ENCODE measurements at regions of chr15 and their contacts with region 1.

Region 1: GRCh38 chr15:62742409-62743171 is 300.0 kb upstream of the TPM1 start:
- DNase-seq: peak; percentile 63
- ATAC-seq: no peak; the same call in 1 of the 2 replicates
- H3K4me3 ChIP-seq: peak overlapping the region; percentile 20; the same call in 1 of the 2 replicates
- H3K27ac ChIP-seq: no peak overlapping the region; the same call in 1 of the 2 replicates
- H3K4me1 ChIP-seq: peaks cover 45% of the 10 kb centered on the region
- H3K27me3 ChIP-seq: no peaks in the 10 kb centered on the region
- CTCF ChIP-seq: peak; percentile 82

Region 2: DNA sequence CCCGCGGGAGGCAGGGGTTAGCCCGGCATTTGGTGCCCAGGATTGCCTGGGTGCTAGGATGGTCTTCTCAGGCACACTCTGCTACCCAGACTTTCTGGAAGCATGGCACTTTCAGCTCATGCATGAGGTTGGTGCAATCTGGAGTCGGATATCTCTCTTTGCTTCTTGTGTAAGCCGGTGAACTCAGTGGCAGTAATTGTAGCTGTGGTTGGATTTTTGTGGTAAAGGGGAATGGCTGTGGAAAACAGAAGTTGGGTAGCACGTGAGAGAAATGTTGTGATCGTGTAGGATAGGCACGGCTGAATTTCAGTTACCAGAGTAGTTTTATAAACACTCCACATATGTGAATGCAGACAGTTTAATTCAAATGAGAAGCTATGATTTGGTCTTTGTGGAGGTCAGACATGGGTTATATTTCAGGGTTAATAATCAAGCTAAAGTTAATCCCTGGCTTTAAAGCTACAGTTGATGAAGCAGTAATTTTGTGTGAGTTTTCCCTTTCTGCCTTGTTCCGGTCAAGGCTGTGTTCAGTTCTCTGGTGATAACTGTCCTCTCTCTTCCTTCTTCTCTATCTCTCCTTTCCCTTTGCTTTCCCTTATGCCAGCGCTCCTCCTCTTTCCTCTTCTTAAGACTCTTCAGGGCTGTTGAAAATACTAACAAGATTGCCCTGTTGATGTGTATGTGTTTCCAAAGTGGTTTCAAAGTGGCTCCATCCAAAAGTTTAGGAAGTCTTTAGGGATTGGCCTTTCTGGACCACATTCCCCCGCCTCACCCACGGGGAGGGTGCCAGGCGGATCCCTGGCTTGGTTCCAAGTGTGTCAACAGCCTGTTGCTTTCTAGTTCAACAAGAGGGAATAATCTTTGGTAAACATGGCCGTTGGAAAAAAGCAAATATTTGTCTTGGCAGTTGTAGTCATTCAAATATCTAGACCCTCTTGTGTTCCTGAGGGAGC is 172.9 kb before region 1 on chr15:
- CTCF ChIA-PET with region 1: interaction called, 3 read pairs
- POLR2A ChIA-PET with region 1: no interaction called
- intact Hi-C with region 1: loop called (anchors 10 kb)
- DNase-seq: peak; percentile 92
- ATAC-seq: peak; percentile 37
- H3K4me3 ChIP-seq: no peak overlapping the region
- H3K27ac ChIP-seq: no peak overlapping the region
- H3K4me1 ChIP-seq: peaks cover 33% of the 10 kb centered on the region
- H3K27me3 ChIP-seq: no peaks in the 10 kb centered on the region
- CTCF ChIP-seq: no peak